ENCODE measurements at regions of chr14 and their contacts with region 1.

Region 1: DNA sequence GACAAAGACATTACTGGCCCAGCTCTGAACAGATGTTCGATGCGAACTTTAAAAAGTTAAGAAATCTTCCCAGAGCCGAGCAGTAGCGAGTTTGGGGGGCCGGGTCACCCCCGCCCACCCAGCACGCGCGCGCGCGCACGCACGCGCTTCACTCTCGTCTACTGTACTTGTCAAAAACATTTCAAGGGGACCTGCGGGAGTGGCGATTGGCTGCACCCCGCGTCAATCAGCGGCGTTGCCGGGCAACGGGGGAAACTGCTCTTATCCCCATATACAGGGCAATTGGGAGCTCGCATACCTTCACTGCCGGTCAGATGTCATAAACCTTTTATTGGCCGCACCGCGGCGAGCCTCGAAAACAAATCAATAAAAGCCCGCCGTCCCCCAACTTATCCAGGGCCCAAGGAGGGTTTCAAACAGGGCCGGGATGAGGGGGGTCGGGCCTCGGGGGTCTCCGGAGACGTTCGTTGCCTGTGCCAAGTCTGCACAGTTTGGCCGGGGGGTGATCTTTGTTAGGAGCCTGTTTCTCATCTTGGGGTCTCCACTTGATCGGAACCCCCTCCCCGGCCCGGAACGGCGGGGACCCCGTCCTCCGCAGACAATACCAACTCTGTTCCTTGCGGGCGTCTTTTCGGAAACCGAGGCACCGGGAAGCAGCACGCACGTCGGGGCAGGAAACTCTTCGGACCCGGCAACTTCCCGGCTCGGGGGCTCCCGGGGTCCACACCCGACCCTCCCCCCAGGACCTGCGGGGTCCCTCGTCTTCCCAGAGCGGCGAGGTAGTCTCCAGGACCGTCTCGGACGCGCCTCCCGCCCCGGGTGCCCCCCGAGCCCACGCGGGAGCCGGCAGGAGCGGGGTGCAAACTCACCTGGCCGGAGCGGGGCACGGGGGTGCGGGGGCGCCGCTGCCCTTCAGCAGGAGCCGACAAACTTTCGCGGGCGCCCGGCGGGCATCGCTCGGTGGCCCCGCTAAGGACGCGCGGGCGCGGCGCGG is 734 bp downstream of the FOXN3 start:
- DNase-seq: peak; percentile 99
- ATAC-seq: peak; percentile 93
- H3K4me3 ChIP-seq: peak overlapping the region; percentile 99 to 100
- H3K27ac ChIP-seq: peak overlapping the region; percentile 94 to 100
- H3K4me1 ChIP-seq: peaks cover 0 to 2% of the 10 kb centered on the region in 2 donors
- H3K27me3 ChIP-seq: no peaks in the 10 kb centered on the region

Region 2: GRCh38 chr14:89040460-89041259 is 375.6 kb before region 1 on chr14:
- intact Hi-C with region 1: loop called (anchors 5 to 10 kb)
- DNase-seq: peak; percentile 92 to 97
- ATAC-seq: peak; percentile 94
- H3K4me3 ChIP-seq: no peak overlapping the region
- H3K27ac ChIP-seq: peak overlapping the region in 1 of 2 donors; percentile 80
- H3K4me1 ChIP-seq: no peaks in the 10 kb centered on the region
- H3K27me3 ChIP-seq: no peaks in the 10 kb centered on the region

Region 3: DNA sequence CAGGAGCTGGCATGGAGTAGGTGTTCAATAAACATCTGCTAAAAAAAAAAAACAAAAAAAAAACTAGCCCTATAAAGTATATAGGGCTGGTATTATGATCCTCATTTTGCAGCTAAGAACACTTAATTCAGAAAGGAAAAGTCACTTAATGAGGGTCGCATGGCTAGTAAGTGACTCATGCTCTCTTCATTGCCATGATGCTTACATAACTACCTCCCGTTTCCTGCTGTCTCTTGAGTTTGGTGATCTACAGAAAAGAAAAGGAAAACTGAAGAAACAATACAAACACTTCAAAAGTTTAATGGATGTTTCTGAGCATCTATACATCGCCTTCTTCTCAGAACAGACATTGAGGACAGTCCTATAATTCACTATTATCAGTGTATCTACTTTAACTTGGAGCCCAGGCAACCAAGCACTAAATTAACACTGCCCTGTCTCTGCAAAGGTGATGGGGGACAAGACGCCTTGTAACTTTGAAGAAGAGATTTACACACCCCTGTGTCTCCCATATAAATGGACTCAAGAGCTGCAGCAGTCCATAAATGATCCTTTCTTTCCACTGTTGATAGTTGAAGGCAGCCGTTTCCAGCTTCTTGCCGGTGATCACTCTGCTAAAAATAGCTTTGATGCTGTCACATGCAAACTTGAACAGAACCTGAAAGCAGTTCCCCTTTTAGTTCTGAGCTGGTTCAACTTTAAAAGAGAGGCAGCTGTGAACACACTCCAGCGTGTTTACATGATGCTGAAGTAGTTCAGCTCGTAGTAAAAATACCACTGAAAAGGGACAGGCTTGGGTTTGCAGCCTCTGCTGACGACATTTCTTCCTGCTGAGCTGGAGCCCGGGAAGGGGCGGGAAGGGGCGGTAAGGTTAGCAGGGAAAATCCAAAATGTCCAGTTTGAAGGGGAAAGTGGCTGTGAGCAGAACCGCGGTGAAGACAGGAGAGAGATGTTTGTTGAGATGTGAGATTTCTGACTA is 112.6 kb before region 1 on chr14:
- intact Hi-C with region 1: loop called in 1 of 2 experiments (anchors 1 kb)
- DNase-seq: peak; percentile 82 to 90
- ATAC-seq: peak; percentile 84
- H3K4me3 ChIP-seq: peak overlapping the region in 1 of 2 donors; percentile 3
- H3K27ac ChIP-seq: peak overlapping the region; percentile 87 to 96
- H3K4me1 ChIP-seq: peaks cover 3 to 4% of the 10 kb centered on the region in 2 donors
- H3K27me3 ChIP-seq: no peaks in the 10 kb centered on the region

Region 4: DNA sequence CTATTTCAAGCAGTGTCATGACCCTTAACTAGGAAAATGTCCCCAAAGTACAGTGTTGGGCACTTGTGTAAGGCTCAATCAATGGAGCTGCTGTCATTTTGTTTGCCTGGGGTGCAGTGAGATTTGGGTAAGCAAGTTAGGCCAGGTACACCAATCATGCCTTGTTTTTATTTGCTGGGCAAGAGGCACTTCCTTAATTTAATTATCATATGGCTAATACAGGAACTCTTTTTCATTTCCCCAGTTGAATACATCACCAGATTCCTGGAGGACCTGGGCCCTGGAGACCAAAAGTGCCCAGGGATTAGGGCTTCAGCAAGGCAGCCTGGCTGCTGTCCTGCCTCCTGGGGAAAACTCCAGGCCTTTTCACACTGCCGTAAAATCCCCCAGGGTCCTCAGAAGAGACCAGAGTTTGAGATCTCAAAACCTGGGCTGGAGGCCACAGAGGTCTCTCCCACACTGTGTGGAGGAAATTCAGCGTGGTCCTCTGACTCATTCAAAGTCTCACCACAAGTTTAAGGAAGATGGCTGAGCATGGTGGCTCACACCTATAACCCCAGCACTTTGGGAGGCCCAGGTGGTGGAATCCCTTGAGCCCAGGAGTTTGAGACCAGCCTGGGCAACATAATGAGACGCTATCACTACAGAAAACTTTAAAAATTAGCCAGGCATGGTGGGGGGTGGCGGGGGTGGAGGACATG is 29.1 kb after region 1 on chr14:
- intact Hi-C with region 1: no loop called
- DNase-seq: no peak
- ATAC-seq: no peak
- H3K4me3 ChIP-seq: no peak overlapping the region
- H3K27ac ChIP-seq: no peak overlapping the region
- H3K4me1 ChIP-seq: peaks cover 0 to 3% of the 10 kb centered on the region in 2 donors
- H3K27me3 ChIP-seq: no peaks in the 10 kb centered on the region

Region 5: GRCh38 chr14:89564286-89564957 is 148.1 kb after region 1 on chr14:
- intact Hi-C with region 1: loop called in 1 of 2 experiments (anchors 10 kb)
- DNase-seq: no peak
- ATAC-seq: no peak
- H3K4me3 ChIP-seq: peak overlapping the region in 1 of 2 donors; percentile 49
- H3K27ac ChIP-seq: no peak overlapping the region
- H3K4me1 ChIP-seq: peaks cover 0 to 2% of the 10 kb centered on the region in 2 donors
- H3K27me3 ChIP-seq: no peaks in the 10 kb centered on the region

Region 6: DNA sequence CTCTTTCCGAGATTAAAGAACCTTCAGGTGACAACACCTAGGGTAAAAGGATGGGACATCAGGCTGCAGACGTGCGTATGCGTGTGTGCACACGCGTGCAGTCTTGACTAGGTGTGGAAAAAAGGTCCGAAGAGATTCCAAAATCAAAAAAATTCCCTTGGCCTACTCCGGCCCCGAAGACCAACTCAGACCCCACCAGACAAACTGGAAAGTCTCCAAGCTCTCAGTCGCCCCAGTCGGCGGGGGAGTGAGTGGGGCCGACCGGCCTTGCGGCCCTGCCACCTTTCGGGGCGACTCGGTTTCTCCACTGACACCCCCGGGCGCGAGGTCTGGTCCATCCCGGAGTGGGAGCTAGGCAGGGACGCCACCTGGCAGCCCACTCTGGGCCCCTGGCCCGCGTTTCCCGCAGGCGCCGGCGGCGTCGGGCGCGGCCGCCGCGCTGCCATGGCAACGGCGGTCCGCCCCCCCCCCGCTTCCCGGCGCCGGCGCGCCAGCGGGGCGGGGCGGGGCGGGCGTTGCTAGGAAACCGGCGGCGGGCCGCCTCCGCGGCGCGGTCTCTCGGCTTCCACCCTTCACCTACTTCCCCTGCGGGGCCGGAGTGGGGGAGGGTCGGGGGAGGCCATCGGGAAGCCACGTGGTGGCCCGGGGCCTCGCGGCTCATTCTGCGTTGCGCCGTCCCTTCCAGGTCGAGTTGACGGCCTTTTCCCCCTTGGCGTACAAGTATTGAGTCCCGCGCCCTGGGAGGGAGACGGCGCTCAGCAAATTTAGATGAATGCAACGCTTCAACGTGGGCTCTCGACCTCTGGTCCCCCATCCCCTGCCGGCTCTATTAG is 285.1 kb after region 1 on chr14:
- intact Hi-C with region 1: loop called (anchors 10 kb)
- DNase-seq: peak; percentile 94 to 95
- ATAC-seq: peak; percentile 95
- H3K4me3 ChIP-seq: peak overlapping the region; percentile 5 to 11
- H3K27ac ChIP-seq: peak overlapping the region in 1 of 2 donors; percentile 31
- H3K4me1 ChIP-seq: no peaks in the 10 kb centered on the region
- H3K27me3 ChIP-seq: no peaks in the 10 kb centered on the region

Region 7: GRCh38 chr14:89848165-89848564 is 431.9 kb after region 1 on chr14:
- intact Hi-C with region 1: loop called (anchors 5 to 10 kb)
- DNase-seq: no peak
- ATAC-seq: no peak
- H3K4me3 ChIP-seq: no peak overlapping the region
- H3K27ac ChIP-seq: no peak overlapping the region
- H3K4me1 ChIP-seq: no peaks in the 10 kb centered on the region
- H3K27me3 ChIP-seq: no peaks in the 10 kb centered on the region